ENCODE measurements at regions of chr18 and their contacts with region 1.

Region 1: DNA sequence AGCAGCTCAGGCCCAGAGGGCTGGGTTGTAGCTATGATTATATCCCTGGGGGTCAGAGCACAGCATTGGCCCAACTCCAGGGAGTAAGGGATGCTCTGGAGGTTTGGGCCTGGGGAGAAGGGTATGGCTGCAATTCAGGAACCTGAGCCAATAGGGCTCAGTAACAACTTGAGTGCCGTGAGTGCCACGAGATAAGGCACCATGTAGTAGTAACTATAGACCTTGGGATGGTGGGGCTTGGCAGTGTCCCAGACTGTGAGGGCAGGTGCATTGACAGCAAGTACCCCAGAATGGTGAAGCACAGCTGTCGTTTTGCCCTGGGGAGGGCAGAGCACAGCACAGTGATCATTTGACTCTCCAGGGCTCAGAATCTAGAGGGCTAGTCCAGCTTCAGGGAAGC is 45.1 kb upstream of the ZNF396 start:
- DNase-seq: no peak
- CTCF ChIP-seq: no peak

Region 2: DNA sequence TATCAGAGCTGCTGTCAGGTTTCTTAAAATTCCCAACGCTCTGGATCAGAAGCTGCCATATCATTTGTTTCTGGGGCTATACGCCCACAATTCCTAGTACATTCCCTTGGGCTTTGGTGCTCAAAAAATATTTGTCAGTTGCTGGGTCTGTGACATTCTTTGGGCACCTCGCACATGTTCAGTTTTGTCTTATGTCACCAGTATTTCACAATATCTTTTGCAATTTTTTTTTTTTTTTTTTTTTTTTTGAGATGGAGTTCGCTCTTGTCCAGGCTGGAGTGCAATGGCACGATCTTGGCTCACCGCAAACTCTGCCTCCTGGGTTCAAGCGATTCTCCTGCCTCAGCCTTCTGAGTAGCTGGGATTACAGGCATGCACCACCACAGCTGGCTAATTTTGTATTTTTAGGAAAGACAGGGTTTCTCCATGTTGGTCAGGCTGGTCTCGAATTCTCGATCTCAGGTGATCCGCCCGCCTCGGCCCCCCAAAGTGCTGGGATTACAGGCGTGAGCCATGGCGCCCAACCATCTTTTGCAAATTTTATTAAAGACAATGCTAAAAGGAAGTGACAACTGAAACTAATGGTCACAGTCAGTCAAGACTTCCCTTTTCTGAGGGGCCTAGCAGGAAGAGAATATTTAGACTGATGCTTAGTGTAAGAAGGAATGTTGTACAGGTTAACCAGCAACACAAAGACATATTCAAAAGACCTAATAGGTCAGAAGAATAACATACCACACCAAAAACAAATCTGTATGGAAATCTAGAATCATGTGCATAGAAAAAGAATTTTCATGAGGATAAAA is 174.6 kb before region 1 on chr18:
- CTCF ChIA-PET with region 1: no interaction called
- POLR2A ChIA-PET with region 1: no interaction called
- DNase-seq: no peak
- CTCF ChIP-seq: no peak

Region 3: GRCh38 chr18:35407871-35408481 is 14.3 kb before region 1 on chr18:
- CTCF ChIA-PET with region 1: interaction called, 11 read pairs
- POLR2A ChIA-PET with region 1: no interaction called
- DNase-seq: peak; percentile 68
- CTCF ChIP-seq: peak; percentile 61

Region 4: DNA sequence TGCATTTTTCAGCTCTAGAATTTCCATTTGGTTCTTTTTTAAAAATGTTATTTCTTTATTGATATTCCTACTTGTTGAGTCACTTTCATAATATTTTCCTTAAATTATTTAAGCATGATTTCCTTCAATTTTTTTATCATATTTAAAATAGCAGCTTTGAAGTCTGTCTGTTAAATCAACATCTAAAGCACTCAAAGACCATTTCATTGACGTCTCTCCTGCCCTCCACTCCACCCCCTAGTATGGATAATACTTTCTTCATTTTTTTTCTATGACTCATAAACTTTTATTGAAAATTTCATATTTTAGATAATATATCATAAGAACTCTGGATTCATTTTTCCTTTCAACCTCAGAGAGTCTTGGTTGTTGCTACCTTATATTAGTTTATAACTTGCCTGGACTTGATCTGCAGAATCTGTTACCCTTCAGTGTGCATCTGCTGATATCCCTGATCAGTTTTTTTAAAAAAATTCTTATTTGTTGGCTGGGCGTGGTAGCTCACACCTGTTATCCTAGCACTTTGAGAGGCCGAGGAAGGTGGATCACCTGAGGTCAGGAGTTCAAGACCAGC is 13.9 kb after region 1 on chr18:
- CTCF ChIA-PET with region 1: interaction called, 13 read pairs
- POLR2A ChIA-PET with region 1: no interaction called
- DNase-seq: no peak
- CTCF ChIP-seq: no peak

Measured in GM10248 (cell line).